ENCODE measurements at regions of chr16 and their contacts with region 1.

Region 1: GRCh38 chr16:17343028-17343427 is 127.7 kb downstream of the XYLT1 start:
- DNase-seq: peak in 8 of 9 donors; percentile 25 to 69 (median 56)
- ATAC-seq: peak; percentile 80
- H3K4me3 ChIP-seq: peak overlapping the region; percentile 16
- H3K4me3 Mint-ChIP-seq: peak overlapping the region; percentile 40 to 83 (median 76)
- H3K27ac ChIP-seq: no peak overlapping the region
- H3K27ac Mint-ChIP-seq: peak overlapping the region; percentile 32 to 95 (median 90)
- H3K4me1 ChIP-seq: peaks cover 51 to 64% of the 10 kb centered on the region in 2 donors
- H3K4me1 Mint-ChIP-seq: peaks cover 61 to 97% (median 83%) of the 10 kb centered on the region in 7 donors
- H3K27me3 ChIP-seq: no peaks in the 10 kb centered on the region
- H3K27me3 Mint-ChIP-seq: no peaks in the 10 kb centered on the region

Region 2: GRCh38 chr16:17238284-17239028 is 104.6 kb before region 1 on chr16:
- CTCF ChIA-PET with region 1: no interaction called
- POLR2A ChIA-PET with region 1: no interaction called
- intact Hi-C with region 1: loop called in 1 of 2 experiments (anchors 10 kb)
- DNase-seq: peak in 1 of 9 donors; percentile 22
- ATAC-seq: peak; percentile 57
- H3K4me3 ChIP-seq: no peak overlapping the region
- H3K4me3 Mint-ChIP-seq: peak overlapping the region in 3 of 10 donors; percentile 5 to 58 (median 30)
- H3K27ac ChIP-seq: no peak overlapping the region
- H3K27ac Mint-ChIP-seq: peak overlapping the region in 3 of 9 donors; percentile 29 to 65 (median 46)
- H3K4me1 ChIP-seq: peaks cover 0 to 5% of the 10 kb centered on the region in 2 donors
- H3K4me1 Mint-ChIP-seq: peaks cover 29 to 47% (median 43%) of the 10 kb centered on the region in 7 donors
- H3K27me3 ChIP-seq: no peaks in the 10 kb centered on the region
- H3K27me3 Mint-ChIP-seq: no peaks in the 10 kb centered on the region

Region 3: GRCh38 chr16:17277977-17278381 is 65.0 kb before region 1 on chr16:
- CTCF ChIA-PET with region 1: no interaction called
- POLR2A ChIA-PET with region 1: no interaction called
- intact Hi-C with region 1: loop called in 1 of 2 experiments (anchors 10 kb)
- DNase-seq: peak in 1 of 9 donors; percentile 11
- ATAC-seq: peak; percentile 34
- H3K4me3 ChIP-seq: no peak overlapping the region
- H3K4me3 Mint-ChIP-seq: no peak overlapping the region
- H3K27ac ChIP-seq: no peak overlapping the region
- H3K27ac Mint-ChIP-seq: peak overlapping the region in 2 of 9 donors; percentile 10 to 33
- H3K4me1 ChIP-seq: peaks cover 0 to 23% of the 10 kb centered on the region in 2 donors
- H3K4me1 Mint-ChIP-seq: peaks cover 29 to 71% (median 57%) of the 10 kb centered on the region in 7 donors
- H3K27me3 ChIP-seq: no peaks in the 10 kb centered on the region
- H3K27me3 Mint-ChIP-seq: no peaks in the 10 kb centered on the region

Region 4: DNA sequence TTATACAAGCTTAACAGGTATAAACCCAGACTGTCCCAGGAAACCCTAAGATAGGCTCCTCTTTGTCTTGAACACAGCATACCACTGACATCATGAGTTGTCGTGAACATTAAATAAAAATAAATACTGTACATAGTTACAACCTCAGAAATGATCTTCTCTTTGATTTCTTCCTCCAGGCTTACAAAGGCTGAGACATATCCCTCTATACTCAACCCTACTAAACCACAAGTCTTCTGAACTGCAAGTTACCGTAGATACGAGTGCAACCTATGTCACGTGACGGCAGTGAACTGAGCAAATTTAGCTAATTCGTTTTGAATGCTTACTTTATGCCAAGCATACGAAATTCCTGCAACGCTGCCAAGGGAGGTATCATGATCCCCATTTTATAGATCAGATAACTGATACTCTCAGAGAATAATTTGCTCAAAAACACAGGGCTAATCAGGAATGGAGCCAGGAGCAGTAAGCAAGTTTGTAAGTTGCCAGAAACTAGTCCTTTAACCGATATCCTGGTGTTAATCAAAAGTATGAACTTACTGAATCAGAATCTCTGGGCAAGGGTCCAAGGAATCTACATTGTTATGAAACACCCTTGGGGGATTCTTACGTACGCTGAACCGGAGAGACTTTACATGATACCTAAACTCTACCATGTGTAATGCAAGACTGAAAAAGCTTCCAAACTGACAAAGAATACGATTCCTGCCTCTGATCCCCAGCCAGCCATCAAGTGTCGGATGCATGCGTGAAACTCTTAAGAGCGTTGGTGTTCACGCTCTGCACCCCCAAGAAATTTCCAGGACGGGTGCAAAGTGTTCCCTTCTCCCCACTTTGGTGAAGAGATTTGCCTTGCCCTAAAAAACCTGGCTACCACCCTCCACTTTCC is 21.5 kb after region 1 on chr16:
- CTCF ChIA-PET with region 1: interaction called, 9 read pairs
- POLR2A ChIA-PET with region 1: interaction called, 22 read pairs
- intact Hi-C with region 1: loop called (anchors 1 kb)
- DNase-seq: peak in 7 of 9 donors; percentile 81 to 95 (median 91)
- ATAC-seq: peak; percentile 90
- H3K4me3 ChIP-seq: peak overlapping the region; percentile 28
- H3K4me3 Mint-ChIP-seq: peak overlapping the region; percentile 48 to 90 (median 73)
- H3K27ac ChIP-seq: peak overlapping the region; percentile 95
- H3K27ac Mint-ChIP-seq: peak overlapping the region; percentile 97 to 100 (median 99)
- H3K4me1 ChIP-seq: peaks cover 90 to 91% of the 10 kb centered on the region in 2 donors
- H3K4me1 Mint-ChIP-seq: peaks cover 68 to 100% (median 97%) of the 10 kb centered on the region in 7 donors
- H3K27me3 ChIP-seq: no peaks in the 10 kb centered on the region
- H3K27me3 Mint-ChIP-seq: no peaks in the 10 kb centered on the region

Region 5: GRCh38 chr16:17375461-17376304 is 32.7 kb after region 1 on chr16:
- CTCF ChIA-PET with region 1: interaction called, 9 read pairs
- POLR2A ChIA-PET with region 1: interaction called, 22 read pairs
- intact Hi-C with region 1: loop called (anchors 2 to 5 kb)
- DNase-seq: no peak
- ATAC-seq: peak; percentile 74
- H3K4me3 ChIP-seq: no peak overlapping the region
- H3K4me3 Mint-ChIP-seq: peak overlapping the region in 4 of 10 donors; percentile 16 to 62 (median 31)
- H3K27ac ChIP-seq: no peak overlapping the region
- H3K27ac Mint-ChIP-seq: peak overlapping the region in 7 of 9 donors; percentile 36 to 81 (median 51)
- H3K4me1 ChIP-seq: peaks cover 32 to 57% of the 10 kb centered on the region in 2 donors
- H3K4me1 Mint-ChIP-seq: peaks cover 43 to 89% (median 84%) of the 10 kb centered on the region in 7 donors
- H3K27me3 ChIP-seq: no peaks in the 10 kb centered on the region
- H3K27me3 Mint-ChIP-seq: no peaks in the 10 kb centered on the region

Region 6: GRCh38 chr16:17416461-17417311 is 73.7 kb after region 1 on chr16:
- CTCF ChIA-PET with region 1: no interaction called
- POLR2A ChIA-PET with region 1: no interaction called
- intact Hi-C with region 1: loop called in 1 of 2 experiments (anchors 1 kb)
- DNase-seq: peak; percentile 24 to 65 (median 55)
- ATAC-seq: peak; percentile 93
- H3K4me3 ChIP-seq: peak overlapping the region; percentile 22
- H3K4me3 Mint-ChIP-seq: peak overlapping the region; percentile 68 to 91 (median 85)
- H3K27ac ChIP-seq: peak overlapping the region; percentile 60
- H3K27ac Mint-ChIP-seq: peak overlapping the region; percentile 79 to 97 (median 91)
- H3K4me1 ChIP-seq: peaks cover 13 to 14% of the 10 kb centered on the region in 2 donors
- H3K4me1 Mint-ChIP-seq: peaks cover 18 to 69% (median 52%) of the 10 kb centered on the region in 7 donors
- H3K27me3 ChIP-seq: no peaks in the 10 kb centered on the region
- H3K27me3 Mint-ChIP-seq: no peaks in the 10 kb centered on the region

Region 7: GRCh38 chr16:17691106-17691898 is 348.3 kb after region 1 on chr16:
- CTCF ChIA-PET with region 1: no interaction called
- POLR2A ChIA-PET with region 1: no interaction called
- intact Hi-C with region 1: no loop called
- DNase-seq: no peak
- ATAC-seq: no peak
- H3K4me3 ChIP-seq: no peak overlapping the region
- H3K4me3 Mint-ChIP-seq: no peak overlapping the region
- H3K27ac ChIP-seq: no peak overlapping the region
- H3K27ac Mint-ChIP-seq: no peak overlapping the region
- H3K4me1 ChIP-seq: no peaks in the 10 kb centered on the region
- H3K4me1 Mint-ChIP-seq: no peaks in the 10 kb centered on the region
- H3K27me3 ChIP-seq: peaks cover 0 to 2% of the 10 kb centered on the region in 2 donors
- H3K27me3 Mint-ChIP-seq: peaks cover 0 to 39% (median 20%) of the 10 kb centered on the region in 5 donors